Activated CD4-positive, alpha-beta T cell treated with anti-CD3 and anti-CD28 coated beads for 36 hours (primary cell): ENCODE measurements at regions of chr5 and their contacts with region 1.

Region 1: DNA sequence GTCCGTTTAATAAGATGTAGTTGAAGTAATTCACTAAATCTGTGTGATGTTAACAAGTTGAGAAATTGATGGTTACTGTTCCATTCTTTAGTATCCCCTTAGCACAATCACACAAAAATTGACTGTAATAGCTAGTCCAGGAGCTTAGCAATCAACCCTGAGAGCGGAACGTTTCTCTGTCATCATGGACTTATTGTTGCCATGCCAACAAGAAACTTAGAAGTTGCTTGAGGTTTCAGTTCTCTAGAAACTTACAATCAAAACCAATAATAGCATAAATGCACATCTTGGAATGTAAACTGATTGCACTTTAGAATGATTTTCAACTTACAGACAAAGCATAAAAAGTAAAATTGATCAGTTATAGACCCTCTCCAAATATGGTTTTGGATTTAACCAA is 125.4 kb upstream of the ANKH start:
- DNase-seq: no peak
- ATAC-seq: no peak
- H3K4me3 Mint-ChIP-seq: no peak overlapping the region
- H3K27ac Mint-ChIP-seq: no peak overlapping the region
- H3K4me1 Mint-ChIP-seq: peaks cover 20% of the 10 kb centered on the region
- H3K27me3 Mint-ChIP-seq: no peaks in the 10 kb centered on the region

Region 2: DNA sequence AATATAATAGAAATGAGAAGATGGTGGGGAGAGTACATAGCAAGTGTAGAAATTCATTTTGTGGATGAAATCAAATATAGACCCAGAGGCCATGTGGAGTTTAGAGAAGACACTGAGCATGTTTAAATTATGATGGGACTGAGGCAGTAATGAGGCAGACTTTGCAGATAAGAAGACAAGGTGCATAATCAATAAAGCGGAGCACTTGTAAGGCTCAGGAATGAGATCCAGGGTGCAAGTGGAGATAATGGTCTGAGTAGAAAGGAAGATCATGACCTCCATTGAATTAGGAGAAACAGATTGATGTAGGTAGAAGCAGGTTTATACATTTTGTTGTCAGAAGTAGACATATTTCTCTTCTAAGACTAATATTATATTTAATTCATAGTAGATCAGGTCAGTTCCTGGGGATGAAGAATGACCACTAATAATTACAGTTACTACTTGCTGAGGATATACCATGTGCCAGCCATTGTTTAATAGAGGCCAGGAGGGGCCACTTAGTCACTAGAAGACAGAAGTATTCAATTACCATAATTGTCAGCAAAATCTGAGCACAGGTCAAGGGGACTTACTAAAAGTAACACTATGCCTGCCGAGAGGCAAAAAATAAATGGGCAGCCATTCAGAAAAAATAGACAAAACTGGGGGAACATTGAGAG is 1532.3 kb before region 1 on chr5:
- CTCF ChIA-PET with region 1: no interaction called
- POLR2A ChIA-PET with region 1: no interaction called
- intact Hi-C with region 1: no loop called
- DNase-seq: no peak
- ATAC-seq: no peak
- H3K4me3 Mint-ChIP-seq: no peak overlapping the region
- H3K27ac Mint-ChIP-seq: no peak overlapping the region
- H3K4me1 Mint-ChIP-seq: no peaks in the 10 kb centered on the region
- H3K27me3 Mint-ChIP-seq: no peaks in the 10 kb centered on the region

Region 3: DNA sequence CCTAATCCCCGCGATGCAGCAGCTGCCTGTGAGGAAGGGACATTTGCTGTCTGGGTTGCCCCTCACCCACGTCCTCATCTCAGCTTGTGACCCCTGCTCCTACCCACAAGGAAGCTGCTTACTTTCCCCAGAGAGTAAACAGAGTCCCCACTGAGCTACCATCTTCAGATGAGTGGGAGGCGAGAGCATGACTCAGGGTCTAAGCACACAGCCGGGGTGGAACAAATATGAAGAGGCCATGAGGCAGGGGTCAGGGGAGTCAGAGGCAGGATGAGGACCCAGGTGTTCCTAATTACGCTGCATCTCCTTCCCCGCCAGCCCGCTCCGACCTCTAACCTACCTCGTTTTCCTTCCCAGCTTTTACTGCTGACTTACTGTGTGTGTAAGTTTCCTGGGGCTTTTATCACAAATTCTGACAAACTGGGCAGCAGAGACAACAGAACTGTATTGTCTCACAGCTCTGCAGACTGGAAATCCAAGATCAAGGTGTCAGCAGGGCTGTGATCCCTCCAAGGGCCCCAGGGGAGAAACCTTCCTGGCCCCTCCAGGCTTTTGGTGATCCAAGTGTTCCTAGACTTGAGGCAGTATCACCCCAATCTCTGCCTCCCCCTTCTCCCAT is 958.5 kb before region 1 on chr5:
- CTCF ChIA-PET with region 1: no interaction called
- POLR2A ChIA-PET with region 1: no interaction called
- intact Hi-C with region 1: no loop called
- DNase-seq: peak; percentile 5
- ATAC-seq: no peak
- H3K4me3 Mint-ChIP-seq: no peak overlapping the region
- H3K27ac Mint-ChIP-seq: no peak overlapping the region
- H3K4me1 Mint-ChIP-seq: peaks cover 6% of the 10 kb centered on the region
- H3K27me3 Mint-ChIP-seq: peaks cover 23% of the 10 kb centered on the region

Region 4: DNA sequence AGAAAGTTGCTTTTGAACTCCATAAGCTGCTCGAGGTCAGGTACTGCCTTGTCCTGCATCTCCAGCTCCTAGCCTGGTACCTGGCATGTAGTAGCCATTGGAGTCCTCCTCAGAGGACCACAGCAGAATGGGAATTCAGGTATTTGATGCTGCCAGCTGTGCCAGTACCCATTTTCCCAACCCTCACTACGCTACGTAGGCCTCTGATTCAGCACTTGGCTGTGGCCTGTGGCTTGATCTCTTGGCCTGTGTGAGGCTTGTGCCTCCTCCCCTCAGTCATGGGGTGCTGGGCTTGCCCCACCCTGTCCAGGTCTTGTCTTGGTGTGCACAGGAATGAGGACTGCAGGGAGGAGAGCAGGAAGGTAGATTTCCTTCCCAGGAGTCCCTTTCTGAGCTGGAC is 320.7 kb before region 1 on chr5:
- CTCF ChIA-PET with region 1: no interaction called
- POLR2A ChIA-PET with region 1: no interaction called
- intact Hi-C with region 1: loop called in 1 of 2 experiments (anchors 2 kb)
- DNase-seq: peak; percentile 52
- ATAC-seq: peak; percentile 61
- H3K4me3 Mint-ChIP-seq: peak overlapping the region; percentile 38
- H3K27ac Mint-ChIP-seq: peak overlapping the region; percentile 87
- H3K4me1 Mint-ChIP-seq: peaks cover 63% of the 10 kb centered on the region
- H3K27me3 Mint-ChIP-seq: no peaks in the 10 kb centered on the region

Region 5: GRCh38 chr5:14706615-14707021 is 290.4 kb before region 1 on chr5:
- CTCF ChIA-PET with region 1: interaction called, 4 read pairs
- POLR2A ChIA-PET with region 1: no interaction called
- intact Hi-C with region 1: loop called in 1 of 2 experiments (anchors 1 kb)
- DNase-seq: peak; percentile 51
- ATAC-seq: peak; percentile 95
- H3K4me3 Mint-ChIP-seq: peak overlapping the region; percentile 48
- H3K27ac Mint-ChIP-seq: peak overlapping the region; percentile 98
- H3K4me1 Mint-ChIP-seq: peaks cover 83% of the 10 kb centered on the region
- H3K27me3 Mint-ChIP-seq: no peaks in the 10 kb centered on the region

Region 6: DNA sequence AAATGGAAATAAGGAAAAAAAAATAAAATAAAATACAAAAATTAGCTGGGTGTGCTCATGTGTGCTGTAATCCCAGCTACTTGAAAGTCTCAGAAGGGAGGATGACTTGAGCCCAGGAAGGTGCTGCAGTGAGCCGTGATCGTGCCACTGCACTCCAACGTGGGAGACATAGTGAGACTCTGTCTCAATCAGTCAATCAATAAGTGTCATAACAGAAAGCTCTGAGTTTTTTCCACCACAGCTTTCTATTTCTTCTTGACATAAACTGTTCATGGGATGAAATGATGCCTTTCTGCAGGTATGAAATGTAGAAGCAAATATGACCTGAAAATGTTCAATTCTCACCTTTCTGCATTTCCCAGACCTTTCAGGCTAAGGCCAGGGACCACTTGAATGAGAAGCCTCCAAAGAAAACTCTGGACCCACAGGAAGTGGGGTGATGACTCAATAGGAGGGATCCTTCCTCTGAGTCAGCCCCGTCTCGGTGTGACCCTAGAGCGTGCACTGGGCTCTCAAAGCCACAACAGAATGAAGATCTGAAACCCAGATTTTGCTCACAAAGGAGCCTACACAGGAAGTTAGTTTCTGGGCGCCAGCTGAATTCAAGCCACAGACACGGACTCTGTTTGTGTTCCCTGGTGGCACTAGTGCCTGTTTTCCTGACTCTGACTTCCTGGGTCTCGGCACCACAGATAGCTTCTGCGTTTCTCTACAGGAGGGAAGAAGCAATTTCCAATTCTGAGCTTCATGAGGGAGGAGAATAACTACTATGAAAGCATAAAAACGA is 187.4 kb before region 1 on chr5:
- CTCF ChIA-PET with region 1: interaction called, 4 read pairs
- POLR2A ChIA-PET with region 1: interaction called, 4 read pairs
- intact Hi-C with region 1: loop called in 1 of 2 experiments (anchors 2 kb)
- DNase-seq: peak; percentile 87
- ATAC-seq: peak; percentile 96
- H3K4me3 Mint-ChIP-seq: peak overlapping the region; percentile 55
- H3K27ac Mint-ChIP-seq: peak overlapping the region; percentile 71
- H3K4me1 Mint-ChIP-seq: peaks cover 51% of the 10 kb centered on the region
- H3K27me3 Mint-ChIP-seq: no peaks in the 10 kb centered on the region